CD8-positive, alpha-beta T cell (primary cell): ENCODE measurements at regions of chrX and their contacts with region 1.

Region 1: GRCh38 chrX:81291996-81292395 is 90.1 kb downstream of the SH3BGRL start:
- DNase-seq: no peak
- ATAC-seq: no peak
- H3K4me3 ChIP-seq: no peak overlapping the region
- H3K4me3 Mint-ChIP-seq: no peak overlapping the region
- H3K27ac ChIP-seq: no peak overlapping the region
- H3K27ac Mint-ChIP-seq: no peak overlapping the region
- H3K4me1 ChIP-seq: no peaks in the 10 kb centered on the region
- H3K4me1 Mint-ChIP-seq: peaks cover 2% of the 10 kb centered on the region
- H3K27me3 ChIP-seq: no peaks in the 10 kb centered on the region
- H3K27me3 Mint-ChIP-seq: no peaks in the 10 kb centered on the region
- CTCF ChIP-seq: no peak

Region 2: GRCh38 chrX:81229229-81229628 is 62.8 kb before region 1 on chrX:
- CTCF ChIA-PET with region 1: no interaction called
- POLR2A ChIA-PET with region 1: no interaction called
- intact Hi-C with region 1: no loop called
- DNase-seq: no peak
- ATAC-seq: no peak
- H3K4me3 ChIP-seq: no peak overlapping the region
- H3K4me3 Mint-ChIP-seq: no peak overlapping the region
- H3K27ac ChIP-seq: no peak overlapping the region
- H3K27ac Mint-ChIP-seq: no peak overlapping the region
- H3K4me1 ChIP-seq: no peaks in the 10 kb centered on the region
- H3K4me1 Mint-ChIP-seq: peaks cover 41% of the 10 kb centered on the region
- H3K27me3 ChIP-seq: no peaks in the 10 kb centered on the region
- H3K27me3 Mint-ChIP-seq: no peaks in the 10 kb centered on the region
- CTCF ChIP-seq: no peak

Region 3: DNA sequence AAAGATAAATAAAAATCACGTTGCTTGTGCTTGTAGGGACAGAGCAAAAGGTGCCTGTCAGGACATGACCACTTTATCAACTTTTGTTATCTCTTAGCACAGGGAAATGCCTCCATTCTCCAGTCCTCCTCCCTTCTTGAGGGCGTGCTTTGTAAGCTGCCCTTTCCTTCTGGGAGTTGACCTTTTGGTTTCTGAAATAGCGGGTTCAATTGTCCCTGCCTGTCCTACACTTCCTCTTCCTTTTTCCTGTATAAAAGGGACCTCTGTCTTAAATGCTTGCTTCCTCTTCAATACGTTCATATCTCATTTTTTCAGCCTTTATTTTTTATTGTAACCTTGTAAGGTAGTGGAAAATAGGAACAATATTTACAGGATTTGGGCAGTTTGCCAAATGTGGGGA is 63.4 kb after region 1 on chrX:
- CTCF ChIA-PET with region 1: no interaction called
- POLR2A ChIA-PET with region 1: no interaction called
- intact Hi-C with region 1: loop called in 1 of 2 experiments (anchors 10 kb)
- DNase-seq: no peak
- ATAC-seq: no peak
- H3K4me3 ChIP-seq: no peak overlapping the region
- H3K4me3 Mint-ChIP-seq: no peak overlapping the region
- H3K27ac ChIP-seq: no peak overlapping the region
- H3K27ac Mint-ChIP-seq: no peak overlapping the region
- H3K4me1 ChIP-seq: no peaks in the 10 kb centered on the region
- H3K4me1 Mint-ChIP-seq: no peaks in the 10 kb centered on the region
- H3K27me3 ChIP-seq: no peaks in the 10 kb centered on the region
- H3K27me3 Mint-ChIP-seq: no peaks in the 10 kb centered on the region
- CTCF ChIP-seq: no peak